Activated B cell treated with CpG ODN at 0.5 μM for 24 hours (primary cell): ENCODE measurements at regions of chr11 and their contacts with region 1.

Region 1: GRCh38 chr11:9613118-9613829 is 39.8 kb downstream of the WEE1 start:
- DNase-seq: peak; percentile 80
- ATAC-seq: peak; percentile 35
- H3K4me3 Mint-ChIP-seq: peak overlapping the region; percentile 92
- H3K27ac Mint-ChIP-seq: peak overlapping the region; percentile 100
- H3K4me1 Mint-ChIP-seq: peaks cover 92% of the 10 kb centered on the region
- H3K27me3 Mint-ChIP-seq: no peaks in the 10 kb centered on the region
- CTCF ChIP-seq: peak; percentile 74

Region 2: GRCh38 chr11:9534791-9535781 is 78.2 kb before region 1 on chr11:
- CTCF ChIA-PET with region 1: interaction called, 133 read pairs
- POLR2A ChIA-PET with region 1: interaction called, 26 read pairs
- intact Hi-C with region 1: no loop called
- DNase-seq: peak; percentile 71
- ATAC-seq: peak; percentile 71
- H3K4me3 Mint-ChIP-seq: no peak overlapping the region
- H3K27ac Mint-ChIP-seq: no peak overlapping the region
- H3K4me1 Mint-ChIP-seq: peaks cover 5% of the 10 kb centered on the region
- H3K27me3 Mint-ChIP-seq: no peaks in the 10 kb centered on the region
- CTCF ChIP-seq: no peak

Region 3: DNA sequence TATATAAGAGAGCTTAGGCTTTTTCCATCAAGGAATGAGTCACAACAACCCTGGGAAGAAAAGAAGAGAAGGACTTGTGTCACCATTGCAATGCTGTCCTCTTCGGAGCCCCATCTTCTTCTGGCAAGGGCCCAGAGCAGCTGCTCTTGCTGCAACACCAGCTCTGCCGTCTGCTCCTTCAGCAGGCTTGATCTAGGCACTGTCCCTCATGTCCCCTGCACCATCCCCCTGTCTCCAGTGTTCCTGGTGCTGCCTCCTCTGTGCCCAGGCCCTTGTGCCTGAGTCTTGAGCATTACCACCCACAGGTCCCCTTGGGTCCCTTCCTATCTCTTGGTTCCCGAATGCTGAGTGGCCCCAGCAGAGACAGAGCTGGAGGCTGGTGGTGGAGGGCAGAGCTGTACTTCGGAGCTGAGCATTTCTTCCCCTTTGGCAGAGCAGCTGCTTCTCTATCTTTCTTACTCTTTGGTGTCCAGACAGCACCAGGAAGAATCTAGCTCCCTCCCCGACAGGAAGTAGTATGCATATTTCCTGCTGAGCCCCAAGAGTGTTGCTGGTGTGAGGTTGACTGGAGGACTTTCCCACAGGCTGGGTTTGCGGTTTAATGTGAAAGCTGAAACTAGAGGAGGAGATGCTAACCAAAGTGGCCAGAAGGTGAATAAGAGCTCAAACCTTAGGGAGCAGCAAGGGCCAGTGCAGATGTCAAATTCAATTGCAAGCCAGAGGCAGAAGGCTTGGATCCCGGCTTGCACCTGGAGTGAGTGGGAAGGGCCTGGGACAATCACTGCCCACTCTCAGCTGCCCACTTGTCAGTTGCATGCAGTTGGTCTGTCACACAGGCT is 12.0 kb before region 1 on chr11:
- CTCF ChIA-PET with region 1: interaction called, 44 read pairs
- POLR2A ChIA-PET with region 1: interaction called, 90 read pairs
- intact Hi-C with region 1: loop called (anchors 1 kb)
- DNase-seq: peak; percentile 53
- ATAC-seq: peak; percentile 76
- H3K4me3 Mint-ChIP-seq: peak overlapping the region; percentile 85
- H3K27ac Mint-ChIP-seq: peak overlapping the region; percentile 96
- H3K4me1 Mint-ChIP-seq: peaks cover 59% of the 10 kb centered on the region
- H3K27me3 Mint-ChIP-seq: no peaks in the 10 kb centered on the region
- CTCF ChIP-seq: no peak

Region 4: GRCh38 chr11:9672288-9672916 is 59.1 kb after region 1 on chr11:
- CTCF ChIA-PET with region 1: interaction called, 10 read pairs
- POLR2A ChIA-PET with region 1: interaction called, 99 read pairs
- intact Hi-C with region 1: no loop called
- DNase-seq: no peak
- ATAC-seq: no peak
- H3K4me3 Mint-ChIP-seq: no peak overlapping the region
- H3K27ac Mint-ChIP-seq: peak overlapping the region; percentile 94
- H3K4me1 Mint-ChIP-seq: peaks cover 71% of the 10 kb centered on the region
- H3K27me3 Mint-ChIP-seq: no peaks in the 10 kb centered on the region
- CTCF ChIP-seq: no peak

Region 5: DNA sequence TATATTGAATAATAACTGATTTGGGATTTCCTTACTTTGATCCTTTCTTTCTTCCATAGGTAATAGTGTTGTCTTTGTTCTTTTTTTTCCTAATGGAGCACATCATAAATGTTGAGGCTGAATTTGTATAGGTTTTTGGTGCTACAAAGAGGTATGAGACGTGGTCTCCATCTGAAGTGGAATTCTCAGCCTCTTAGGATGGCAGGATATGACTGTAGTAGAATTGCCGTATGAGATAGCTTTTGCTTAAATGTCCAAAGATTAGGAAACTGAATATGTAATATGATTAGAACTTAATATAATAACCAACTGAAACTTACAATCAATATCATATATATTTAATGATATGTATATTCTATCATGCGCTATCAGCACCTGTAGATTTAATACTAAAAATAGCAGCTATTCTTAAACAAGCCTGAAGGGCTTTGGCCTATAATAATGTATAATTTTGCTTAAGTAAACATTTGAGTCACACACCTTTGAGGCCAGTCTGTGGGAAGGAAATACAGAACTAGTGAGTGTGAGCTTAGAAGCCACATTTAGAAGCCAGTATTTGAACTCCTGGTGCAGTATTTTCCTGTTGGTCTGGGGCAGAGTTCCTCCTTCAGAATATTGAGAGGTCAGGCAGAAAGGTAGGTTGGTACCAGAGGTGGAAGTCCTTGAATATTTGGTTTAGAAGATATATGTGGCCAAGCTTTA is 113.2 kb after region 1 on chr11:
- CTCF ChIA-PET with region 1: interaction called, 7 read pairs
- POLR2A ChIA-PET with region 1: interaction called, 14 read pairs
- intact Hi-C with region 1: no loop called
- DNase-seq: no peak
- ATAC-seq: peak; percentile 35
- H3K4me3 Mint-ChIP-seq: peak overlapping the region; percentile 47
- H3K27ac Mint-ChIP-seq: peak overlapping the region; percentile 84
- H3K4me1 Mint-ChIP-seq: peaks cover 82% of the 10 kb centered on the region
- H3K27me3 Mint-ChIP-seq: no peaks in the 10 kb centered on the region
- CTCF ChIP-seq: no peak

Region 6: DNA sequence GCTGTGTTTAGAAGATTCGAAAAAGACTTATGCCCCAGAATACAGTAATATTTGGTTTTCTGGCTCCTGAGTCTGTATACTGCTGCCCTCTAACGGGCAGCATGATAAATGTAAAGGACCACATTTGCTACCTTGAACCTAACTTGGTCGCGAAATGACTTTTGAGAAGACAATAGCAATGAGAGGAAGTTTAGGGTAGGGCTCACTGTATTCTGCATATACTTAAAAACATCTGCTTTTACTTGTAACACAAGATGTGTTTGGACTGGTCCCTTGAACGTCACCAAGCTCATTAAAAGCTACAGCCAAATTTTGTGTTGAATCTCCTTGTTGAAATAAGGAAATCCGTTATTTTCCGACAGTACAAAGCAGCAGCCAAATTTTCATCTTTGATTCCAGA is 359.7 kb after region 1 on chr11:
- CTCF ChIA-PET with region 1: interaction called, 7 read pairs
- POLR2A ChIA-PET with region 1: no interaction called
- intact Hi-C with region 1: loop called (anchors 1 kb)
- DNase-seq: no peak
- ATAC-seq: peak; percentile 66
- H3K4me3 Mint-ChIP-seq: no peak overlapping the region
- H3K27ac Mint-ChIP-seq: no peak overlapping the region
- H3K4me1 Mint-ChIP-seq: peaks cover 6% of the 10 kb centered on the region
- H3K27me3 Mint-ChIP-seq: no peaks in the 10 kb centered on the region
- CTCF ChIP-seq: no peak